Psoas muscle (tissue), 8 donors: ENCODE measurements at regions of chr19 and their contacts with region 1.

Region 1: GRCh38 chr19:46265217-46265828 is 31.5 kb upstream of the HIF3A start:
- DNase-seq: peak in 1 of 2 donors; percentile 18
- ATAC-seq: peak; percentile 70 to 92 (median 84)
- H3K4me3 ChIP-seq: no peak overlapping the region
- H3K27ac ChIP-seq: no peak overlapping the region
- H3K4me1 ChIP-seq: no peaks in the 10 kb centered on the region
- H3K27me3 ChIP-seq: peaks cover 0 to 26% (median 4%) of the 10 kb centered on the region in 3 donors
- CTCF ChIP-seq: peak; percentile 83

Region 2: DNA sequence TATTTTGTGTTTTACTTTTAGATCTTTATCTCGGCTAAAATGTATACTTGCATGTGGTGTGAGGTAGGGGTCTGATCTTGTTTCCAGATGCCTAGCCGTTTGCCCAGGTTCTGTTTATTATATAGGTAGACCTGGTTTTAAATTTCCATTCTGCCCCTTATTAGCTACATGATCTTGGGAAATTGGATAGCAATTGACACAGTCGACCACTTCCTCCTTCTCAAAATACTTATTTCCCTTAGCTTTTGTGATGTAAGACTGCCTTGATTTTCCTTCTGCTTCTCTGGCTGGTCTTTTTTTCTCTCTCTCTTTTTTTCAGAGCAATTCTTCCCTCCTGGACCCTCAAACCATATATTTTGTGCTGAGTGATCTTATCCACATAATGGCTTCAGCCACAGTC is 239.5 kb before region 1 on chr19:
- intact Hi-C with region 1: loop called (anchors 1 to 2 kb)
- DNase-seq: no peak
- ATAC-seq: no peak
- H3K4me3 ChIP-seq: no peak overlapping the region
- H3K27ac ChIP-seq: no peak overlapping the region
- H3K4me1 ChIP-seq: no peaks in the 10 kb centered on the region
- H3K27me3 ChIP-seq: peaks cover 0 to 49% (median 4%) of the 10 kb centered on the region in 3 donors
- CTCF ChIP-seq: no peak

Region 3: DNA sequence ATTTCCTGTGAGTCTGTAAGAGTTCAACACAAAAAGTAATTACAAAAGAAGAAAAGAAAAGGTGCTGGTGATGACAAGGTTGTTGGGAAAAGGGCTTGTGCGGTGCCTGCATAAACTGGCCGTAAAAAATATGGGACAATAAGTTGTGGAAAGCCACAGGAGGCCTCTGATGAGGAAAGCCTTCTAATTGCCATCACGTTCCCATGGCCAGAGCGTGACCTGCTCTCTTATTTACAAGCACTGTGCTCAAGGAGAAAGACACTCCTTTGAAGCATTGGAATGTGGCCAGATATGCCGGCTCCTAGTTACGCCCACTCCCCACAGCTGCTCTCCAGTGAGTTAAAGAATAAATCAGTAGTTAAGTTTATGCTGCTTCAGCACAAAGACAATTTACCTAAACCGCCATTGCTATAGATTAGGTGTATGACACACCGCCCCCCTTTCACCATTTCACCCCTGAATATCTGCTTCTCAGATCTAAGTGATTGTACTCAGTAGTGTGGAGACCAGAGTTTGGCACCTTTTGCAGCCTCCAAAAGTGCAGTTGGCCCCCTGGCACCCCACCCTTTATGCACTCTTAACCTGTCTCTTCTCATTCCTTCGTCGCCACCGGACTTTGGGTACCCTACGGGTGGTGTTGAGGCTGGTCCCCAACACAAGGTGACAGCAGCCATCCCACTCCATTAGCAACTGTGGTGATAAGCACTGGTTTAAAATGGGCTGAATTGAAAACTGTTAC is 234.3 kb before region 1 on chr19:
- intact Hi-C with region 1: loop called (anchors 1 to 2 kb)
- DNase-seq: no peak
- ATAC-seq: no peak
- H3K4me3 ChIP-seq: no peak overlapping the region
- H3K27ac ChIP-seq: no peak overlapping the region
- H3K4me1 ChIP-seq: no peaks in the 10 kb centered on the region
- H3K27me3 ChIP-seq: peaks cover 0 to 15% (median 2%) of the 10 kb centered on the region in 3 donors
- CTCF ChIP-seq: no peak

Region 4: GRCh38 chr19:46081928-46082727 is 183.2 kb before region 1 on chr19:
- intact Hi-C with region 1: loop called (anchors 2 to 5 kb)
- DNase-seq: no peak
- ATAC-seq: peak in 3 of 4 donors; percentile 53 to 65 (median 61)
- H3K4me3 ChIP-seq: no peak overlapping the region
- H3K27ac ChIP-seq: no peak overlapping the region
- H3K4me1 ChIP-seq: no peaks in the 10 kb centered on the region
- H3K27me3 ChIP-seq: peaks cover 7 to 51% (median 15%) of the 10 kb centered on the region in 3 donors
- CTCF ChIP-seq: peak; percentile 59